ENCODE measurements at regions of chr4 and their contacts with region 1.

Region 1: DNA sequence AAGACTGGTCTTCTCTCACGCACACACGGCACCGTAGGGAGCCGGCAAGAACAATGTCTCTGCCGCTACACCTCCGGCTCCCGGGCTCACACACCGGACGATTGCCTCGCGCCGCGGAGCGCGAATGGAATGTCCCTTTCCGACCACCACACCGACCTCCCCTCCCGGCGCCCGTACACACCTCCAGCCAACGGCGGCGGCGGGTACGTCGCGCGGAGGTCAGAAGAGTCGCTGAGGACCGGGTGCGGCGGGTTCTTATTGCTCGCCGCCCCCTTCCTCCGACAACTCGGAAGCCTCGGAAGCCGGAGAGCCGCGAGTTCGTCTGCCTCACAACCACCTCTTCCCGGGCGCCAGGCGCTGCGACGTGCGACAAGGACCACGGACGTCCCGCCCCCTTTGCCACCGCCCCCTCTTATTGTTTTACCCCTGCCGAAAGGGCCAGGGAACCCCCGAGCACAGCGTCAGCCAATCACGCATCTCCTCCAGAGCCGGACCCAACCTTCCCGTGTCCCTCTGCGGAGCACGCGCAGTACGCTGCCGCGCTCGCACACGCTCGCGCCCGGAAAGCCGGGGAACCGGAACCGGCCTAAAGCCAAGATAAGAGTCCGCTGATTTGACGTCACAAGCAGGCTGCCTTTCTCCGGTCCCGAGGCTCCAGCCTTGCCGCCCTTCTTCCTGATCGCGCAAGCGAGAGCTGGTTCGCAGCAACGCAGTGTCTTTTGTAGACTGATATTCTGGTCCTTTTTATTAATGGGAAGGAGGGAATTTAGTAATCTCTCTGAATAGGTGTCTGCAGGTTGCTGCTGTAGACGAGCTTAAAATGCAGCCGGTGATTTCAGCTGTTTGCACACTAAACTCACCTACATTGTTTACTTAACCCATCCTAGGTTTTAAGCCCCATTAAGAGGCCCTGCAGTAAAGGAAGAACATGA is at the start of gene G3BP2:
- DNase-seq: peak; percentile 96
- ATAC-seq: peak; percentile 96
- H3K4me3 ChIP-seq: peak within 1 kb of the TSS; percentile 87 to 100 (median 99)
- H3K27ac ChIP-seq: peak within 1 kb of the TSS; percentile 87
- H3K4me1 ChIP-seq: peaks cover 41% of the 10 kb centered on the region
- H3K27me3 ChIP-seq: no peaks in the 10 kb centered on the region; a peak in 1 of 5 replicates
- CTCF ChIP-seq: no peak
- EP300 ChIP-seq: peak in 1 of 2 experiments; percentile 13; a peak in 1 of 4 replicates
- POLR2A ChIP-seq: peak; percentile 82 to 86
- RAD21 ChIP-seq: peak; percentile 48; the same call in 1 of the 2 replicates
- total RNA-seq, gene G3BP2: 179 and 316 TPM in 2 replicates

Region 2: GRCh38 chr4:75702919-75703411 is 29.7 kb after region 1 on chr4:
- CTCF ChIA-PET with region 1: no interaction called
- POLR2A ChIA-PET with region 1: interaction called, 3 read pairs
- in situ Hi-C with region 1: no loop called
- intact Hi-C with region 1: loop called (anchors 1 kb)
- DNase-seq: peak; percentile 83
- ATAC-seq: peak; percentile 98
- H3K4me3 ChIP-seq: peak overlapping the region; percentile 13 to 53 (median 48)
- H3K27ac ChIP-seq: peak overlapping the region; percentile 62
- H3K4me1 ChIP-seq: peaks cover 31% of the 10 kb centered on the region
- H3K27me3 ChIP-seq: no peaks in the 10 kb centered on the region
- CTCF ChIP-seq: no peak
- EP300 ChIP-seq: peak in 1 of 2 experiments; percentile 31; a peak in 2 of 4 replicates
- POLR2A ChIP-seq: peak; percentile 61 to 84
- RAD21 ChIP-seq: no peak; the same call in 1 of the 2 replicates

Region 3: DNA sequence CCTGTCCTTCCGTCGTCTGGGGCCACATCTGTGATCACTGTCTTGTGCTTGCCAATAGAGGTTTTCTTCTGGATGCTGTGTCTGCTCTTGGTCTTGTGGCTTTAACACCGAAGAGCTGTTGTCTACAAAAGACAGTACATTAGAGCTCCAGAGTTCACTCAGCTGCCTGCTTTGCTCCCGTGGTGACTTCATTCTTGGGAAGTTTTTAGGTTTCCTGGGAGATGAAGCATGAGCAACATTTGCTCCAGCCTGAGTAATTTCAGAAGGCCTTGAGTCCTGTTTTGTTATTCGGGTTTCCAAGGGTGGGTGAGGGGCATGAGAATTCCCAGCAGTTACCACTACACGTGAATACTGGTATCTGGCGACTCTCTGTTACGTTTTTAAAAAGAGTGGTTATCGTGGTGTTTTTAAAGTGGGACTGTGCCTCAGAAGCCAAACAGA is 951.0 kb after region 1 on chr4:
- CTCF ChIA-PET with region 1: no interaction called
- POLR2A ChIA-PET with region 1: no interaction called
- in situ Hi-C with region 1: no loop called
- intact Hi-C with region 1: no loop called
- DNase-seq: no peak
- ATAC-seq: no peak
- H3K4me3 ChIP-seq: no peak overlapping the region
- H3K27ac ChIP-seq: no peak overlapping the region
- H3K4me1 ChIP-seq: no peaks in the 10 kb centered on the region
- H3K27me3 ChIP-seq: peaks cover 1 to 4% of the 10 kb centered on the region in 2 experiments; a peak in 2 of 5 replicates
- CTCF ChIP-seq: no peak
- EP300 ChIP-seq: no peak
- POLR2A ChIP-seq: no peak
- RAD21 ChIP-seq: no peak

Measured in HepG2 (cell line).